ENCODE measurements at regions of chr6 and their contacts with region 1.

Region 1: GRCh38 chr6:158853072-158853871 is 34.1 kb upstream of the EZR start:
- DNase-seq: peak; percentile 95
- H3K4me3 Mint-ChIP-seq: no peak overlapping the region
- H3K27ac Mint-ChIP-seq: no peak overlapping the region
- H3K4me1 Mint-ChIP-seq: peaks cover 29% of the 10 kb centered on the region
- H3K27me3 Mint-ChIP-seq: no peaks in the 10 kb centered on the region

Region 2: GRCh38 chr6:158978757-158979156 is 125.5 kb after region 1 on chr6:
- CTCF ChIA-PET with region 1: no interaction called
- intact Hi-C with region 1: no loop called
- DNase-seq: no peak
- H3K4me3 Mint-ChIP-seq: no peak overlapping the region
- H3K27ac Mint-ChIP-seq: no peak overlapping the region
- H3K4me1 Mint-ChIP-seq: no peaks in the 10 kb centered on the region
- H3K27me3 Mint-ChIP-seq: no peaks in the 10 kb centered on the region

Region 3: GRCh38 chr6:158999666-159000403 is 146.6 kb after region 1 on chr6 and contains the start of gene RSPH3:
- CTCF ChIA-PET with region 1: no interaction called
- intact Hi-C with region 1: loop called (anchors 1 kb)
- DNase-seq: peak; percentile 94
- H3K4me3 Mint-ChIP-seq: peak within 1 kb of the TSS; percentile 98
- H3K27ac Mint-ChIP-seq: peak within 1 kb of the TSS; percentile 82
- H3K4me1 Mint-ChIP-seq: peaks cover 45% of the 10 kb centered on the region
- H3K27me3 Mint-ChIP-seq: no peaks in the 10 kb centered on the region
- total RNA-seq, gene RSPH3: 3.0 to 3.2 TPM

Region 4: GRCh38 chr6:159056003-159056402 is 202.7 kb after region 1 on chr6:
- CTCF ChIA-PET with region 1: no interaction called
- intact Hi-C with region 1: loop called (anchors 5 kb)
- DNase-seq: peak; percentile 41
- H3K4me3 Mint-ChIP-seq: peak overlapping the region; percentile 22
- H3K27ac Mint-ChIP-seq: peak overlapping the region; percentile 91
- H3K4me1 Mint-ChIP-seq: peaks cover 60% of the 10 kb centered on the region
- H3K27me3 Mint-ChIP-seq: no peaks in the 10 kb centered on the region

Measured in activated naive CD4-positive, alpha-beta T cell treated with anti-CD3 and anti-CD28 coated beads for 36 hours (primary cell).